Activated CD4-positive, alpha-beta T cell treated with anti-CD3 and anti-CD28 coated beads for 36 hours (primary cell): ENCODE measurements at regions of chr11 and their contacts with region 1.

Region 1: DNA sequence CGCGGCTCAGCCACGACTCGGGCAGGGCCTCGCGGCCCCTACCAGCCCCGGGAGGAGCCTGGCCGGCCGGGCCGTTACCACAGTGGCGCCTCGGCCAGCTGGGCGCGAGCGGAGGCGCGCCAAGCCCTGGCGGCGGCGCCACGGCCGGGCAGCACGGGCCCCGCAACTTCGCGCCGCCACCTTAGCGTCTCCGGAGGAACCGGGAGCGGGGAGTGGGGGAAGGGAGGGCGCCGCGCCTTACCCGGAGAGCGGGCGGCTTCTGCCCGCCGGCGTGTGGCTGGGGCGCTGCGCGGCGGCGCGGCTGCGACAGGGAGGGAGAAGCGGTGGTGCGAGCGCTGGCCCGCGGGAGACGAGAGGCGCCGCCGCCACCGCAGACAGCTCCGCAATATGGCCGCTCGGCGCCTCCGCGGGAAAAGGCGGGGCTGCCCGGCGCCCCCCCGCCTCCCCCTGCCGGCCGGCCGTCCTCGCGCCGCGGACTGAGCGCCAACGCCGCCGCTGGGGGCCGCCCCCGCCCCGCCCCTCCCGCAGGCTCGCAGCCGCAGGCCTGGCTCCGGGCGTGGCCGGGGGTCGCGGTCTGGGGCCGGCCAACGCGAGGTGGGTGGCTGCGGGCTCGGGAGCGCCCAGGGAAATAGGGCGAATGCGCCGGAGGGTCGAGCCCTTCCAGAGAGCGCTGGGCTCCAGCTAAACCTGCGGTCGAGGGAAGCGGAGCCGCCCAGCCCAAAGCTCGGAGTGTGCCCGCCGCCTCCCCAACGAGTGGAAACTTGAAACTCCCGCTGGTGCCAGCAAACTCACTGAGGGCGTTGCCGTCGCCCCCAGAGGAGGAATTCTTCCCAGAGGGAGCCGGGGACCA is at the start of gene RDX:
- DNase-seq: peak; percentile 77
- ATAC-seq: peak; percentile 70
- H3K4me3 Mint-ChIP-seq: peak within 1 kb of the TSS; percentile 85
- H3K27ac Mint-ChIP-seq: peak within 1 kb of the TSS; percentile 88
- H3K4me1 Mint-ChIP-seq: peaks cover 39% of the 10 kb centered on the region
- H3K27me3 Mint-ChIP-seq: no peaks in the 10 kb centered on the region
- total RNA-seq, gene RDX: 53.9 to 61.7 TPM

Region 2: DNA sequence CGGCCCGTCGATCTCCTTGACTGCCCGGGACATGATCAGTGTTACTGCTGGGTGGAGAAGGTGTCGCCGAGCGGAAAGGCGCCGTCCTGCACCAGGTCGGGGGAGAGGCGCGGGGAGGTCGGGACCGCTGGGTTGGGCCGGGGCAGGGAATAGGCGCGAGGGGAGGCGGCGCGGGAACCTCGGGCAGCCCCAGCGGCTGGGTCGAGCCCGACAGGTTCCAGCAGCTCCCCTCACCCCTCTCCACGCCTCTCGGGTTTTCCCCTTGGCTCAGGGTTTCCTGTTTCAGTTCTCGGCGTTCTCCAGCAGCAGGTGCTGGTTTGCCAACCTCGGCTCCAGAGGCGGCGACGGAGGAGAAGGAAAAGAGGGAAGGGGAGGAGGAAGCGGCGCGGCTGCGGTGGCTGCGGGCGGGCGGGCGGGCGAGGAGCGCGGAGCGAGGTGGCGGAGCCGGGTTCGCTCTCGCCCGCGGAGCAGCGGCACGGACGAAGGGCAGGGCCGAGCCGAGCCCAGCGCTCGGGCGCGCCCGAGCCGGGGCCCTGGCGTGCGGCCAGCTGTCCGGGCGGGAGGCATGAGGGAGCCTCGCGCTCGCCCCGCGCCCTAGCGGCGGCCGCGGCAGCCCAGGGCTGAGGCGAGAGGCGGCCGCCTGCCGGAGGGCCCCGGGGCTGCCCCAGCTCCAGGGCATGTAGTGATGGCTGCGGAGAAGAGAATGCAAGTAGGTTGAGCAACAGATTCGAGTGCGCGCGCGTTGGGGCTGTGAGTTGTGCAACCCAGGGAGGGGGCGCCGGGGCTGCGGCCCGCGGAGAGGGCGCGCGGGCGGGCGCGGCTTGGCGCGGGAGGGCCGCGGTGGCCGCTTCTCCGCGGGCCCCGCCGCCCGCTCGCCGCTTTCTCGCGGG is 203.7 kb before region 1 on chr11 and contains the start of gene ZC3H12C:
- CTCF ChIA-PET with region 1: no interaction called
- POLR2A ChIA-PET with region 1: no interaction called
- intact Hi-C with region 1: loop called in 1 of 2 experiments (anchors 5 kb)
- DNase-seq: peak; percentile 74
- ATAC-seq: peak; percentile 73
- H3K4me3 Mint-ChIP-seq: peak within 1 kb of the TSS; percentile 74
- H3K27ac Mint-ChIP-seq: peak within 1 kb of the TSS; percentile 52
- H3K4me1 Mint-ChIP-seq: peaks cover 10% of the 10 kb centered on the region
- H3K27me3 Mint-ChIP-seq: peaks cover 49% of the 10 kb centered on the region
- total RNA-seq, gene ZC3H12C: 1.6 TPM

Region 3: DNA sequence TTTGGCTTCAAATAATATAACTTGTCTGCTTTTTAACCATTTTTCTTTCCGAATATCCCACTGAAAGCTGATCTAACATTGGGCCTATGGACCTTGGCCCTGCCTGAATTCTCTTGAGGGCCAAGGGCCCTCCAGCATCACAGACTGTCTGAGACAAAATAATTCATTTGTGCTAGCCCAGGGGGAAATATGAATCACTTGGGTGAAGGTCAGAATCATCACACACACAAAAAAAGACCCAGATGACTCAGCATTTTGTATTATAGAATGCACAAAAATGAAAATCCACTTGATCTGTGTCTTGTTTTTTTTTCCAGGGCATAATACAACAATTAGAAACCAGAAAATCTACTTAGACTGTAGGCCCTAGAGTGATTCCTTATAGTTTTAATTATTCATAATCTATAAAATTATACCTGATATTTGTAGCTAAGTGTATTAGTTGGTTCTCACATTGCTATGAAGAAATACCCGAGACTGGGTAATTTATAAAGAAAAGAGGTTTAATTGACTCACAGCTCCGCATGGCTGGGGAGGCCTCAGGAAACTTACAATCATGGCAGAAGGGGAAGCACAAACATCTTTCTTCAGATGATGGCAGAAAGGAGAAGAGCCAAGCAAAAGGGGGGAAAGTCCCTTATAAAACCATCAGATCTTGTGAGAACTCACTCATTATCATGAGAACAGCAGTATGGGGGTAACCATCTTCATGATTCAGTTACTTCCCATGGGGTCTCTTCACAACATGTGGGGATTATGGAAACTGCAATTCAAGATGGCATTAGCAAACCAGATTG is 15.5 kb after region 1 on chr11:
- CTCF ChIA-PET with region 1: interaction called, 4 read pairs
- POLR2A ChIA-PET with region 1: no interaction called
- intact Hi-C with region 1: loop called in 1 of 2 experiments (anchors 1 kb)
- DNase-seq: peak; percentile 21
- ATAC-seq: peak; percentile 86
- H3K4me3 Mint-ChIP-seq: no peak overlapping the region
- H3K27ac Mint-ChIP-seq: peak overlapping the region; percentile 72
- H3K4me1 Mint-ChIP-seq: peaks cover 15% of the 10 kb centered on the region
- H3K27me3 Mint-ChIP-seq: no peaks in the 10 kb centered on the region

Region 4: GRCh38 chr11:110327508-110327907 is 31.1 kb after region 1 on chr11:
- CTCF ChIA-PET with region 1: no interaction called
- POLR2A ChIA-PET with region 1: interaction called, 3 read pairs
- intact Hi-C with region 1: loop called in 1 of 2 experiments (anchors 2 kb)
- DNase-seq: no peak
- ATAC-seq: no peak
- H3K4me3 Mint-ChIP-seq: peak overlapping the region; percentile 76
- H3K27ac Mint-ChIP-seq: peak overlapping the region; percentile 47
- H3K4me1 Mint-ChIP-seq: peaks cover 24% of the 10 kb centered on the region
- H3K27me3 Mint-ChIP-seq: no peaks in the 10 kb centered on the region

Region 5: GRCh38 chr11:110376711-110377324 is 80.4 kb after region 1 on chr11:
- CTCF ChIA-PET with region 1: interaction called, 3 read pairs
- POLR2A ChIA-PET with region 1: no interaction called
- intact Hi-C with region 1: loop called (anchors 1 to 2 kb)
- DNase-seq: peak; percentile 37
- ATAC-seq: peak; percentile 10
- H3K4me3 Mint-ChIP-seq: no peak overlapping the region
- H3K27ac Mint-ChIP-seq: no peak overlapping the region
- H3K4me1 Mint-ChIP-seq: peaks cover 17% of the 10 kb centered on the region
- H3K27me3 Mint-ChIP-seq: peaks cover 3% of the 10 kb centered on the region

Region 6: DNA sequence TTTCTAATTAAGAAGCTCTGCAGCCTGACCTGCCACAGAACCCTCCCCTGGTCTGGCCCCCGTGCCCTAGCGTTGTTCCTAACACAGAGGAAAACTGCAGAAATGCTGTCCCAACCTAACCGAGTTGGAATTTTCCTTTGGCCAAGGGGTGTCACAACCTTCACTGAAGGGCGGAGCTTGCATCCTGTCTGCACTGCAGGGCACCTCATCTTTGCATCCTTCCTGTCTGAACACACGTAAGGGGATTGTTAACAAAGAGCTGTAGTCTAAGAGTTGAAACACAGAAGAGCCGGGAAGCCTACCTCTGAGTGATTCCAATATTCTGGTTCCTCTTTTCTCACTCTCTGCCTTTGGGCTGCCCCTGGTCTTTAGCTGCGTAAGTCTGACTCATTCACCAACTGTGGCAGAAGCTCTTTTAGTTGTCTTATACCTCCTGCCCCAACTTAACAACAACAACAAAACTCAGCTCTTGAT is 1642.3 kb after region 1 on chr11:
- CTCF ChIA-PET with region 1: no interaction called
- POLR2A ChIA-PET with region 1: no interaction called
- intact Hi-C with region 1: loop called in 1 of 2 experiments (anchors 5 kb)
- DNase-seq: peak; percentile 66
- ATAC-seq: peak; percentile 89
- H3K4me3 Mint-ChIP-seq: peak overlapping the region; percentile 73
- H3K27ac Mint-ChIP-seq: peak overlapping the region; percentile 93
- H3K4me1 Mint-ChIP-seq: peaks cover 51% of the 10 kb centered on the region
- H3K27me3 Mint-ChIP-seq: no peaks in the 10 kb centered on the region